ENCODE measurements at regions of chr22 and their contacts with region 1.

Region 1: DNA sequence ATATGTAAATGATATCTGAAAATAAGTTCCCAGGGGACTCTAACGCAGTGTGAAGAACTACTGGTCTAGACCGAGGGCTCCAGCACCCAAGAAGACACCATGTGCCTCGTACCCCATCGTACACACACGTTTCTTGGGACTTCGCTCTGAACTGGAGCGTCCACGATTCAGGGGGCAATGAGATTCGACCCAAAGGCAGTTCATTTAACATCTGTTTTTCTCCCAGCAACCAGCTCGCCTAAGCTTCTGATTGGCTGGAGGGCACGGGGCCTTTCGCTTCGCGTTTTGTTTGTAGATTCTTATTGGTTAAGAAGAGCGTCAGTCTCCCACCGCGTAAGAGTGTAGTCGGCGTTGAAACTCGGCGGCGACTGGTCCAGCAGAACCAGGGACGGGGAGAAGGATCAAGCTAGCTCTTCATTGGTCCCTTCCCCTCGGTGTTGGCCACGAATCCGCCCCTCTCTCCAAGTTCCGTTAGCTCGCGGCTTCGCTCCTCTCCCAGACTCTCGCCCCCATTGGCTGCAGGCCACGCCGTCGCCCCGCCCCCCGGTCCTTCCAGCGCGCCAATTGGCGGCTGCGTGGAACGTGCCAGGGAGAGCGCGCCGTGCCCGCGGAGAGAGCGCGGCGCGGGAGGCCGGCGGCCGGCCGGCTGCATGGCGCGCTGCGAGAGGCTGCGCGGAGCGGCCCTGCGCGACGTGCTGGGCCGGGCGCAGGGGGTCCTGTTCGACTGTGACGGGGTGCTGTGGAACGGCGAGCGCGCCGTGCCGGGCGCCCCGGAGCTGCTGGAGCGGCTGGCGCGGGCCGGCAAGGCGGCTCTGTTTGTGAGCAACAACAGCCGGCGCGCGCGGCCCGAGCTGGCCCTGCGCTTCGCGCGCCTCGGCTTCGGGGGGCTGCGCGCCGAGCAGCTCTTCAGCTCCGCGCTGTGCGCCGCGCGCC is at the start of gene PDXP:
- DNase-seq: peak; percentile 98
- H3K4me3 ChIP-seq: peak within 1 kb of the TSS; percentile 67 to 70
- H3K27ac ChIP-seq: peak within 1 kb of the TSS; percentile 73 to 93
- H3K4me1 ChIP-seq: peaks cover 19 to 37% of the 10 kb centered on the region in 2 experiments; a peak in 3 of 4 replicates
- H3K27me3 ChIP-seq: no peaks in the 10 kb centered on the region
- CTCF ChIP-seq: no peak
- EP300 ChIP-seq: no peak; a peak in 1 of 4 replicates
- RAD21 ChIP-seq: no peak
- polyA plus RNA-seq, gene PDXP: 22.5 and 24.5 TPM in 2 replicates

Region 2: GRCh38 chr22:37633625-37634416 is 24.6 kb before region 1 on chr22:
- CTCF ChIA-PET with region 1: interaction called, 898 read pairs
- POLR2A ChIA-PET with region 1: interaction called, 12 read pairs
- DNase-seq: peak; percentile 91
- H3K4me3 ChIP-seq: peak overlapping the region; percentile 2 to 7; a peak in 2 of 4 replicates
- H3K27ac ChIP-seq: peak overlapping the region; percentile 69 to 98
- H3K4me1 ChIP-seq: peaks cover 23 to 51% of the 10 kb centered on the region in 2 experiments
- H3K27me3 ChIP-seq: no peaks in the 10 kb centered on the region
- CTCF ChIP-seq: peak; percentile 41
- EP300 ChIP-seq: peak in 1 of 2 experiments; percentile 25; a peak in 1 of 4 replicates
- RAD21 ChIP-seq: no peak; the same call in 1 of the 2 replicates

Region 3: GRCh38 chr22:37676736-37677492 is 18.5 kb after region 1 on chr22:
- CTCF ChIA-PET with region 1: interaction called, 123 read pairs
- POLR2A ChIA-PET with region 1: interaction called, 28 read pairs
- DNase-seq: peak; percentile 91
- H3K4me3 ChIP-seq: peak overlapping the region; percentile 64 to 92
- H3K27ac ChIP-seq: peak overlapping the region; percentile 94
- H3K4me1 ChIP-seq: peaks cover 16 to 22% of the 10 kb centered on the region in 2 experiments; a peak in 2 of 4 replicates
- H3K27me3 ChIP-seq: no peaks in the 10 kb centered on the region
- CTCF ChIP-seq: no peak
- EP300 ChIP-seq: peak; percentile 49 to 84; a peak in 3 of 4 replicates
- RAD21 ChIP-seq: no peak

Region 4: DNA sequence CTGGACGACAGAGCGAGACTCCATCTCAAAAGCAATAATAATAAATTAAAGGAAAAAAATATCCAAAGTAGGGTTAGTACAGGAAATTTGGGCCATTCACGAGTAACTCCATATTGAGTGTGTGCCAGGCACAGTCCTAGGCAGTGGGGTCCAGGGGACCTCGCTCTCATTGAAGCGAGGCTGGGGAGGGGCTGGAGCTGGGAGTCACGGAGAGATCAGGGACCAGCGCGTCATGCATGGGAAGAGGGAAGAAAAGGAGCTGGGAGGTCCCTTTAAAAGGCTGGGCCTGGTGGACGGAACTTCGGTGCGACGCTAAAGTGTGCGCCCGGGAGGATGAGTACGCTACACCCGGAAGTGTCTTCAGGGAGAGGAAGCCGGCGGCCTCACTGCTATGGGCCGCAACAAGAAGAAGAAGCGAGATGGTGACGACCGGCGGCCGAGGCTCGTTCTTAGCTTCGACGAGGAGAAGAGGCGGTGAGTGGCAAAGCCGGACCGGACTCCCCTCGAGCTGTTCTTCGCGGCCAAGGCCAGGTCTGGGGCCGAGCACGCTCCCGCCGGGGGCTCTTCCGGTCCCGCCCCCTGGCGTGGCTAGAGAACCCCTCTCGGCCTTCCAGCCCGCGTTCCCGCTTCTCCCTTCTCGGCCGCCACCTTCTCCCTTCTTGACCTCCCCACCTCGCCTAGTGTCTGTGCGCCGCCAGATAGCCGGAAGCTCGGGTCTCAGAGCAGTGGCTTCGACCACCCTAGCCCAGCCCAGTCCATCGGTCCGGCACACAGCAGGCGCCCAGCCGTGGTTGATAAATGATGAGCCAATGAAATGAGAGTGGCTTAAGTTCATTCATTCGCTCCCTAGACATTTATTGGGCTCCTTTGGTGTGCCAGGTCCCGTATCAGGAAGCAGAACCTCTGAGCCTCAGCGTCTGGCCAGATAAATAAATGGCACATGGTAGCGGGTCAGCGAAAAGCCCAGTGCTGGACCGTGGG is 27.9 kb after region 1 on chr22 and contains the start of gene NOL12:
- CTCF ChIA-PET with region 1: interaction called, 123 read pairs
- POLR2A ChIA-PET with region 1: interaction called, 14 read pairs
- DNase-seq: peak; percentile 91
- H3K4me3 ChIP-seq: peak within 1 kb of the TSS; percentile 79 to 91
- H3K27ac ChIP-seq: peak within 1 kb of the TSS; percentile 84 to 90
- H3K4me1 ChIP-seq: peaks cover 2 to 9% of the 10 kb centered on the region in 2 experiments; a peak in 2 of 4 replicates
- H3K27me3 ChIP-seq: no peaks in the 10 kb centered on the region
- CTCF ChIP-seq: no peak
- EP300 ChIP-seq: no peak
- RAD21 ChIP-seq: no peak
- polyA plus RNA-seq, gene NOL12: 48.2 and 52.2 TPM in 2 replicates

Region 5: GRCh38 chr22:37734964-37735451 is 76.6 kb after region 1 on chr22:
- CTCF ChIA-PET with region 1: interaction called, 10 read pairs
- POLR2A ChIA-PET with region 1: no interaction called
- DNase-seq: peak; percentile 91
- H3K4me3 ChIP-seq: no peak overlapping the region; a peak in 1 of 4 replicates
- H3K27ac ChIP-seq: peak overlapping the region in 1 of 2 experiments; percentile 8; a peak in 1 of 4 replicates
- H3K4me1 ChIP-seq: peaks cover 0 to 10% of the 10 kb centered on the region in 2 experiments; a peak in 1 of 4 replicates
- H3K27me3 ChIP-seq: no peaks in the 10 kb centered on the region
- CTCF ChIP-seq: peak; percentile 41
- EP300 ChIP-seq: no peak
- RAD21 ChIP-seq: peak; percentile 72